Activated T-helper 1 cell treated with anti-CD3 and anti-CD28 coated beads, Interleukin-12 subunit alpha, Interleukin-12 subunit beta, Interleukin-2, Interleukin-4 antibody, amounts not matched to agents 30 ng/mL and 10 ng/mL and 1 ng/mL, durations not matched to agents 14 hours and 24 hours and 36 hours (primary cell): ENCODE measurements at regions of chr1 and their contacts with region 1.

Region 1: DNA sequence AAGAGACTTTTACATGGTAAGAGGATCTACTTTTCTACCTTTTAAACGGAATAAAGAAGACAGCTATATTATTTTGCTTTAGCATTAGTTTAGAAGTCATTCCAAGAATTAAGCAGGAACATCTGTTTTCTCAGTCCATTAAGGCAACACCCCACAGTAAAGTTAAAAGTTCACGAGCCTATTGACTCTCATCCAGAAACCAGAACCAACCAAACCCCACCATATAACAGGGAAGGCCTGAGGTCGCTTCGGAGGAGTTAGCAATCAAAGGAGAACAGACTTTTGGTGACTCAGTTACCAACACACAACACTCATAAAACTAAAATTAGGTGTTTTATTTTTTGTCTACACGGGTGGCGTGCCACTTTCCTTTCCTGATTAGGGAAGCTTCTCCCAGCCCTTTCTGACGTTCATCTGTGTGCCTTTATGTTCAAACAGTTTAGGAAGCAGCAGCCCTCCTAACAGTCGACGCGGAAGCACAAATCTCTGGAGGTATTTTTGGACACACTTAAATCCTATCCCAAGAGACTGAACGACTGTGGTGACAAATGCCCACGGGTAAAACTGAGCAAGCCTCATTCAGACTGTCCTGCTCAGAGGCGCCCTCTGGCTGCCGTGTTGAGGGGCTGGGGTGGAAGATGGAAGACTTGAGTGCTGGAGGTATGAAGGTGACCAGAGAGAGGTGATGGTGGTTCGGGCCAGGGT is 8.6 kb upstream of the PLA2G2C start:
- DNase-seq: peak; percentile 67
- H3K4me3 Mint-ChIP-seq: no peak overlapping the region
- H3K27ac Mint-ChIP-seq: no peak overlapping the region
- H3K4me1 Mint-ChIP-seq: peaks cover 19% of the 10 kb centered on the region
- H3K27me3 Mint-ChIP-seq: peaks cover 31% of the 10 kb centered on the region

Region 2: DNA sequence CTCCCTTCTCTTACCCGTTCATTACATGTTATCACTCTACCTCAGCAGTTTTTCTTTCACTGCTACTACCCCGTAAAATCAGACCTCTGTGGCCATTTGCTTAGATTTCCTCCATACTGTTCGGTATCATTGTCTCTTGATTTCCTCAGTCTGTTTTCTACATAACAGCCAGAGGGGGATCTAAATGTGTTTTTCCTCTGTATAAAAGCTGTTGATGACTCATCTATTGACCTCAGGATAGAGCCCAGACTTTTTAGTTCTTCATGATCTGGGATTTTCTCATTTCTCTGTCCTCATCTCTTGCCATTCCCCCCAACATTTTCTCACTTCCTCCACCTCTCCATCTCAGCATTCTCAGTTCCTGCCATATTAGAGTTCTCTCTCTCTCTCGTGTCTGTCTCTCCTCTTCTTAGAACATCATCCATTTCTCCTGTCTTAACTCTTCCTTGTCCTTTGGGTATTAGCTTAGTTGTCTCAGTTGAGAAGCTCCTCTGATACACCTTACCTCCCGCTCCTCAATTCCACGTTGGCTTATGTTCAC is 302.2 kb before region 1 on chr1:
- intact Hi-C with region 1: no loop called
- DNase-seq: no peak
- H3K4me3 Mint-ChIP-seq: no peak overlapping the region
- H3K27ac Mint-ChIP-seq: peak overlapping the region; percentile 1
- H3K4me1 Mint-ChIP-seq: peaks cover 18% of the 10 kb centered on the region
- H3K27me3 Mint-ChIP-seq: no peaks in the 10 kb centered on the region

Region 3: DNA sequence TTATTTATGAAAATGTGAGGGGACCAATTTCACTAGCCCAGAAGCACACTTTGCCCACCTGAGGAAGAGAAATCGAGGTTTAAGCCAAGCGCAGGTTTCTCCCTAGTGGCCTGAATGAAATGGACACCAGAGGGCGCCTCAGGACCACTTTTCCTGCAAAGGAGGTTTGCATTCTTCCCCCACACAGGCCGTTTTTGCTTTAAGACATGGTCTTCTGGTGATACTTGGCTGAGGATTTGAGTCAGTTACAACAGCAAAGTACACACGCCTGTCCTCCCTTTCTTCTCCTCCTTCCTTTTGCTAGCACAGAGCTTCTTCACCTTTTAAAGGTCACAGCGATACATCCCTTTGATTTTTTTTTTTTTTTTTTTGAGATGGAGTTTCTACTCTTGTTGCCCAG is 276.9 kb before region 1 on chr1:
- intact Hi-C with region 1: loop called (anchors 1 kb)
- DNase-seq: peak; percentile 57
- H3K4me3 Mint-ChIP-seq: no peak overlapping the region
- H3K27ac Mint-ChIP-seq: no peak overlapping the region
- H3K4me1 Mint-ChIP-seq: peaks cover 6% of the 10 kb centered on the region
- H3K27me3 Mint-ChIP-seq: no peaks in the 10 kb centered on the region

Region 4: DNA sequence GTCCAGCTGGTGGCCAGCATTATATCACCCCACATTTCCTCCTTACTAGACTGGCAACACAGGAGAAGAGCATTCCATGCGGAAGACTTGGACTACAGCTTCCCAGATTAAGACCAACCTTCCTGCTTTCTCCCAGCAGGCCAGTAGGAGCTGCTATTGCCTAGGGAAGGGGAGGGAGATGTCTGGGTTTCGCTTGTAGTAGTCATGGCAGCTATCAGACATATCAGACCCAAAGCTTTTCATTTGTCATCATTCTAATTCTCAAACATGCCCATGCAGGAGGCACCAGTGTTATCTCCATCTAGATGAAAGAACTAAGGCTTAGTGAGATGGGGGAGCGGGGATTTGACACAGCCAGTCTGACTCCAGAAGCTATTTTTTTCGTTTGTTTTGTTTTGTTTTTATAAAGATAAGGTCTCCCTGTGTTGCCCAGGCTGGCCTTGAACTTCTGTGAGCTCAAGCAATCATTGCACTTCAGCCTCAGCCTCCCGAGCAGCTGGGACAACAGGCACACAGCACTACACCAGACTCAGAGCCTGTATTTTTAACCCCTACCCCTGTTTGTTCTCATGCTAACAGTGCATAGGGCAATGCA is 220.0 kb before region 1 on chr1:
- intact Hi-C with region 1: loop called (anchors 1 kb)
- DNase-seq: no peak
- H3K4me3 Mint-ChIP-seq: no peak overlapping the region
- H3K27ac Mint-ChIP-seq: no peak overlapping the region
- H3K4me1 Mint-ChIP-seq: no peaks in the 10 kb centered on the region
- H3K27me3 Mint-ChIP-seq: peaks cover 14% of the 10 kb centered on the region

Region 5: DNA sequence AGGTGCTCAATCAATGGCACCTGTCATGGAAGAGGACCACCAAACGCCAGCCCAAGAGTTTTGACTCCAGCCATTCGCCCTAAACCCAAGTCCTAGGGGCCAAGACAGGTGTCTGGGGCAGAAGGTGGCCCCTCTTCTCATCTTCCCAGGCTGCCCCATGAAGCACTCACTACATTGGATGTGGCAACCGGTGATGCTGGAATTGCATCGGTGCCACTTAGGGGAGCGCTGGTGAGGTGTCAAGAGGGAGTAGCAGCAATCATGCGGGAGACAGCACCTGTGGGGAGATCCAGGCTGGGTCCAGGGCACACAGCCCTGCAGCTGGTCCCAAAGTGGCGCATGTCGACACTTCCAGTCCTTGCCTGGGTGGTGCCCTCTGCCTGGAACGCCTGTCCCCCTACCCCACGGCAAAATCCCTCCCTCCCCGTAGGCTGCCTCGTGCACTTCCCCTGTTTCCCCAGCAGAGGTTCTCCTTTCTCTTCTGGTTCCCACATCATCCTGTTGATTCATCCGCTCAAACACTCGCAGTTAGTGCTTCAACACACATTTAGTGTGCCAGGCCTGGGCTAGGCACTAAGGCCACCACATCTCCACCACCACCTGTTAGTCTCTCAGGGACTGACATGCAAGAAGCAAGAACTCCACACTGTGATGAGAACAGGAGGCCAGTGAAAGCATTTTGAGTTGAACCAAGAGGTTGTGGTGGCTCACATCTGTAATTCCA is 94.1 kb before region 1 on chr1:
- intact Hi-C with region 1: loop called (anchors 1 kb)
- DNase-seq: peak; percentile 1
- H3K4me3 Mint-ChIP-seq: no peak overlapping the region
- H3K27ac Mint-ChIP-seq: no peak overlapping the region
- H3K4me1 Mint-ChIP-seq: no peaks in the 10 kb centered on the region
- H3K27me3 Mint-ChIP-seq: peaks cover 4% of the 10 kb centered on the region

Region 6: DNA sequence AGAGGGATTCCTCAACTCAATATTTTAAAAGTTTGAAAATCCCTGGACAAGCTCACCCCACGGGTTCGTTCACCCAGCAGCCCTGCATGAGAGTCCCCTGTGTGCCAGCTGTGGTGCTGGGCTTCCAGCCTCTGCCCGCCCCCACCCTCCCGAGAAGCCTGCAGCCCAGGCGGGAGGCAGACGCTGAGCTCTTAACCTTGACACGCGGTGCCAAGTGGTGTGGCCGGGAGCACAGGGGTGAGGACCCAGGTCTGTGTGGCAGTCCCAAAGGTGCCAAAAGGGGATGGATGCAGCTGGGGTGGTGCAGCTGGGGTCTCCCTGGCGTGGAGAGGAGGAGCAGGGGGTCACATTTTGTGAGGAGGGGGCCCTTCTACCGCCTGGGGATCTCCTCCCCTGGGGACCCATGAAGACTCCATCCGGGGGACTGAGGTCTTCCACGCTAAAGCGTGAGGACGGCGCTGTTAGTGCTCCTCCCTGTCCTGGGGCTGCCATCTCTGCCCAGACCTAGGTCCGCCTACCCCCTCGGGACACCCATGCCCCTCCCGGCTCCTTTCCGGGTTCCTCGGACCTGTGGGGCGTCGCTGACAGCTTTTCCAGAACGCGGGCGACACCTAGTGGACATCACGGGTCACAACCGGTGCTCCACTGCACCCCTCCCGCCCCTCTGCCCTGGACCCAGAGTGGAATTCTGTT is 42.9 kb before region 1 on chr1:
- intact Hi-C with region 1: loop called (anchors 1 kb)
- DNase-seq: peak; percentile 69
- H3K4me3 Mint-ChIP-seq: peak overlapping the region; percentile 73
- H3K27ac Mint-ChIP-seq: peak overlapping the region; percentile 20
- H3K4me1 Mint-ChIP-seq: peaks cover 17% of the 10 kb centered on the region
- H3K27me3 Mint-ChIP-seq: no peaks in the 10 kb centered on the region

Region 7: GRCh38 chr1:20165522-20165951 is 29.4 kb before region 1 on chr1:
- intact Hi-C with region 1: loop called (anchors 1 kb)
- DNase-seq: no peak
- H3K4me3 Mint-ChIP-seq: no peak overlapping the region
- H3K27ac Mint-ChIP-seq: no peak overlapping the region
- H3K4me1 Mint-ChIP-seq: peaks cover 11% of the 10 kb centered on the region
- H3K27me3 Mint-ChIP-seq: peaks cover 4% of the 10 kb centered on the region